ENCODE measurements at regions of chr13 and their contacts with region 1.

Region 1: GRCh38 chr13:26253787-26254582 is at the start of gene CDK8:
- DNase-seq: peak; percentile 76 to 94 (median 86)
- ATAC-seq: peak; percentile 84
- H3K4me3 ChIP-seq: peak within 1 kb of the TSS; percentile 73
- H3K4me3 Mint-ChIP-seq: peak within 1 kb of the TSS; percentile 94
- H3K27ac ChIP-seq: peak within 1 kb of the TSS; percentile 78 to 84
- H3K27ac Mint-ChIP-seq: peak within 1 kb of the TSS; percentile 84
- H3K4me1 ChIP-seq: peaks cover 12% of the 10 kb centered on the region
- H3K4me1 Mint-ChIP-seq: peaks cover 42% of the 10 kb centered on the region
- H3K27me3 ChIP-seq: no peaks in the 10 kb centered on the region
- H3K27me3 Mint-ChIP-seq: no peaks in the 10 kb centered on the region
- CTCF ChIP-seq: no peak
- total RNA-seq, gene CDK8: 6.0 to 6.7 TPM

Region 2: GRCh38 chr13:24922745-24923591 is 1331.0 kb before region 1 on chr13:
- CTCF ChIA-PET with region 1: no interaction called
- POLR2A ChIA-PET with region 1: no interaction called
- intact Hi-C with region 1: loop called in 1 of 2 experiments (anchors 10 kb)
- DNase-seq: peak; percentile 84 to 97 (median 90)
- ATAC-seq: peak; percentile 98
- H3K4me3 ChIP-seq: peak overlapping the region; percentile 91
- H3K4me3 Mint-ChIP-seq: peak overlapping the region; percentile 91
- H3K27ac ChIP-seq: peak overlapping the region; percentile 70 to 93
- H3K27ac Mint-ChIP-seq: peak overlapping the region; percentile 90
- H3K4me1 ChIP-seq: peaks cover 5% of the 10 kb centered on the region
- H3K4me1 Mint-ChIP-seq: peaks cover 18% of the 10 kb centered on the region
- H3K27me3 ChIP-seq: peaks cover 0 to under 1% of the 10 kb centered on the region in 2 experiments
- H3K27me3 Mint-ChIP-seq: no peaks in the 10 kb centered on the region
- CTCF ChIP-seq: no peak

Region 3: GRCh38 chr13:25301347-25302047 is 952.5 kb before region 1 on chr13 and contains the start of gene NUP58:
- CTCF ChIA-PET with region 1: no interaction called
- POLR2A ChIA-PET with region 1: no interaction called
- intact Hi-C with region 1: loop called in 1 of 2 experiments (anchors 5 kb)
- DNase-seq: peak; percentile 87 to 98 (median 90)
- ATAC-seq: peak; percentile 97
- H3K4me3 ChIP-seq: peak within 1 kb of the TSS; percentile 80
- H3K4me3 Mint-ChIP-seq: peak within 1 kb of the TSS; percentile 99
- H3K27ac ChIP-seq: peak within 1 kb of the TSS; percentile 92 to 94
- H3K27ac Mint-ChIP-seq: peak within 1 kb of the TSS; percentile 95
- H3K4me1 ChIP-seq: peaks cover 26% of the 10 kb centered on the region
- H3K4me1 Mint-ChIP-seq: peaks cover 49% of the 10 kb centered on the region
- H3K27me3 ChIP-seq: peaks cover 0 to 4% of the 10 kb centered on the region in 2 experiments
- H3K27me3 Mint-ChIP-seq: peaks cover 14% of the 10 kb centered on the region
- CTCF ChIP-seq: no peak
- total RNA-seq, gene NUP58: 56.5 to 60.9 TPM

Region 4: DNA sequence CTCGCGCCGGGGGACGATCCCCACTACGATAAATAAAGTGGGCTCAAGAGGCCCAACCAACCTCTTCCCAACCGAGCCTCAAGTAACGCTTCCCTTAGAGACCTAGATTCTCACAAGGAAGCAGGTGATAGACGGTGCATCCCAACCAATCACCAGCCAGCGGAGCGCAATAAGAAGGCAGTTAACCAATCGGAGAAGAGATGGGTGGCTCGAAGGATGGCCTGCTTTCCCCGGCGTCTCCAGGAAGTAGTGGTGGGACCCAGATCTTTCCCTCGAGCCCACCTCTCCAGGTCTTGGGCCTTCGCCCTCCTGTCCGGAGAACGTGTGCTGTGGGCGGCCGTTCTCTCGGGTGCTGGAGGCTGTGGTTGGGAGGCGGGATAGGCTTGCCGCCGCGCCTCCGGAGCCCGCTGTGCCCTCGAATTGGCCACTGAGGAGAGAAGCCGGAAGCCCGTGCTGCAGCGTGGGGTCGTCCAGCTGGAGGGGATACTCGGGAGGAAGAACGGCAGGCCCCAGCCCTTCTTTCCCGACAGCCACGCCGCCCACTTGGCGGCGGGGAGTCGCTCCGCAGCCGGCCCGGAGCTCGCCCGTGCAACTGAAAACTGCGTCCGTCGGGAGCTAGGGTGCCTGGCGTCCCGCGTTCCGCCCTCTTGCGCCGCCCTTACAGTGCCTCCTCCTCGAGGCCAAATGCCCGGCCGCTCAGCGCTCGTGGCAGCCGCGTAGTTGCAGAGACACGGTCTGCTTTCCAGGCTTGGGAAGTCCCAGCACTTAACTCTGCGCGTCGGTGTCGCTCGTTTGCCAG is 32.1 kb before region 1 on chr13 and contains the start of gene RNF6:
- CTCF ChIA-PET with region 1: interaction called, 4 read pairs
- POLR2A ChIA-PET with region 1: interaction called, 11 read pairs
- intact Hi-C with region 1: loop called (anchors 1 kb)
- DNase-seq: peak; percentile 75 to 96 (median 84)
- ATAC-seq: peak; percentile 94
- H3K4me3 ChIP-seq: peak within 1 kb of the TSS; percentile 84
- H3K4me3 Mint-ChIP-seq: peak within 1 kb of the TSS; percentile 99
- H3K27ac ChIP-seq: peak within 1 kb of the TSS; percentile 96
- H3K27ac Mint-ChIP-seq: peak within 1 kb of the TSS; percentile 89
- H3K4me1 ChIP-seq: peaks cover 17% of the 10 kb centered on the region
- H3K4me1 Mint-ChIP-seq: peaks cover 46% of the 10 kb centered on the region
- H3K27me3 ChIP-seq: no peaks in the 10 kb centered on the region
- H3K27me3 Mint-ChIP-seq: no peaks in the 10 kb centered on the region
- CTCF ChIP-seq: no peak
- total RNA-seq, gene RNF6: 46.5 to 49.5 TPM

Region 5: DNA sequence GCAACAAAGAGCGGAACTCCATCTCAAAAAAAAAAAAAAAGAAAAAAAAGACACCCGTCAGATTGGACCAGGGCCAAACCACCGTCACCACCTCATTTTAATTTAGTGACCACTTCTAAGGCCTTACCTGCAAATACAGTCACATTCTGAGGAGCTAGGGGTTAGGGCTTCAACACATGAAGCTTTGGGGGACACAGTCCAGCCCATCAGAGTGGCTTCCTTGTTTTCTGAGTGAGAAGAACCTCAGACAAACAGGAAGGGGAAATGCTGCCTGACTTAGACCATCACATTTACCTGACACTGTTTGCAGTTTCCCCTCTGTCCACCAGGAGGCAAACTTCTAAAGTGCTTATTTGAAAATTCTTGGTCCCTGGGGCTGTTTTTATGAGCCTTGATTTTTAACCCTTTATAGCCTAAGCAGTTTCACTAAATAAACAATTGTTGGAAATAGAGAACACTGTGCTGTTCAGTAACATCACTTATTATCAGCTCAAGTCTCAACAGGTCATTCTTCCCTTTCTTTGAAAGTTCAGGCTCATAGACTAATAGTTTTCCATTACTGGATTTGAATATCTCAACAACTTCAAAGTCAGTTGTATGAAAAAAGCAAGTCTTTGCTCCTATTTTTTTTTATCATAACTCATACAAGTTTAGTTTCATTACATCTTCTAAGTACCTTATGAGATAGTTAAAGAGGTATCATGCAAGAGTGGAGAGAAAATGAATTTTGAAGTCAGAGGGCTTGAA is 228.6 kb after region 1 on chr13:
- CTCF ChIA-PET with region 1: no interaction called
- POLR2A ChIA-PET with region 1: no interaction called
- intact Hi-C with region 1: loop called in 1 of 2 experiments (anchors 5 kb)
- DNase-seq: peak; percentile 37 to 87 (median 54)
- ATAC-seq: peak; percentile 97
- H3K4me3 ChIP-seq: no peak overlapping the region
- H3K4me3 Mint-ChIP-seq: peak overlapping the region; percentile 16
- H3K27ac ChIP-seq: peak overlapping the region in 1 of 2 donors; percentile 60
- H3K27ac Mint-ChIP-seq: peak overlapping the region; percentile 79
- H3K4me1 ChIP-seq: peaks cover 23% of the 10 kb centered on the region
- H3K4me1 Mint-ChIP-seq: peaks cover 27% of the 10 kb centered on the region
- H3K27me3 ChIP-seq: no peaks in the 10 kb centered on the region
- H3K27me3 Mint-ChIP-seq: no peaks in the 10 kb centered on the region
- CTCF ChIP-seq: peak; percentile 85